A549 (cell line): ENCODE measurements at regions of chr7 and their contacts with region 1.

Region 1: DNA sequence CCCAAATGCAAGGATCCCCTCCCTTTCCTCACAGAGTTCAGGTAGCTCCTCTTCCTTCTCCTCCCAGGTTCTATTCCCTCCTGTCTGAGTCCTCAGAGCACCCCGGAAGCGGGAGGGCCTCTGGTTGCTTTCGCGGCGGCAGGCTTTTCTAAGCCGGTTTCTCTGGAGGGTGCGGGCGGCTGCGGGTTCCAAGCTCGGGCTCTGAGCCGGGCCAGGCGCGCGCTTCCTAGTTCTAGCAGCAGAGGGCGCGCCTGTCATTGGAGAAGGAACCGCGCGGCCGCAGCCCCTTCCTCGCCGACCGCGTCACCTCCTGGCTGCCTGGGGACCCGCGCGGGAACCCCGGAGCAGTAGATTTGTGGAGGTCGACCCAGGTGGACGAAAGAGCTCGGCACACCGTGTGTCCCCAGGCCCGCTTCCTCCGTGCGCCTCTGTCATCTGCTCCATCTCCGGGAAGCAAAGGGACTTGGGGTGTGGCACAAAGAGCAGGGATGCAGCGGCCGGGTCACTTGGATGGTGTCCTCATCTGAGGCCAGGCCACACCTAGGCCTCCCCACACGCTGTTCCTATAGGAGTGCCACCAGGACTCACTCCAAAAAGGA is 389.0 kb upstream of the PODXL start:
- DNase-seq: peak; percentile 56 to 58
- ATAC-seq: peak; percentile 61 to 86
- H3K4me3 ChIP-seq: peak overlapping the region; percentile 24; the same call in 1 of the 3 replicates
- H3K27ac ChIP-seq: peak overlapping the region; percentile 76 to 92
- H3K4me1 ChIP-seq: peaks cover 45% of the 10 kb centered on the region
- CTCF ChIP-seq: peak; percentile 92
- EP300 ChIP-seq: no peak
- POLR2A ChIP-seq: no peak
- RAD21 ChIP-seq: peak; percentile 95 to 99

Region 2: DNA sequence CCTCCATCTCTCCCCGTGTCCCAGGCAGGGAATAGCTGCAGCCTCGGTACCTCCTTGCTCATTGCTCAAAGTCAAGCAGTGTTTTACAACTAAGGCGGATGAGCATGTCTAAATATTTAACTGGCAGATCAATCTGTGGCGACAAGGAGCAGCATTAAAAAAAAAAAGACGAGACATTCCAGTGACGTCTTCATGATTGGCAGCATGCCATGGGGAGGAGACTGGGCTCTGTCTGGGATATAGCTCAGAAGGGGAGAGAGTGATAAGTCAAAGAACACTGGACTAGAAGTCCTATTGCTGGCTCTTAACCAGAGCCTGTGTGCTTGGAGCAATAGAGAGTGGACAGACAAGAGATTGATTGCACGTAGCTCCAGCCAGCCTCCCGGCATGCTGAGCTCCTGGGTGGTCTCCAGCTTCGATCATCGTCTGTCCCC is 101.5 kb before region 1 on chr7:
- CTCF ChIA-PET with region 1: interaction called, 14 read pairs
- POLR2A ChIA-PET with region 1: no interaction called
- DNase-seq: peak in 1 of 2 experiments; percentile 60
- ATAC-seq: peak; percentile 81 to 82
- H3K4me3 ChIP-seq: no peak overlapping the region
- H3K27ac ChIP-seq: 0 out of 6 replicates have a peak overlapping the region, but pooled peaks of 1 of the 2 experiments have one; percentile 22
- H3K4me1 ChIP-seq: peaks cover 17% of the 10 kb centered on the region; the same call in 2 of the 3 replicates
- CTCF ChIP-seq: no peak
- EP300 ChIP-seq: no peak
- POLR2A ChIP-seq: no peak
- RAD21 ChIP-seq: no peak

Region 3: DNA sequence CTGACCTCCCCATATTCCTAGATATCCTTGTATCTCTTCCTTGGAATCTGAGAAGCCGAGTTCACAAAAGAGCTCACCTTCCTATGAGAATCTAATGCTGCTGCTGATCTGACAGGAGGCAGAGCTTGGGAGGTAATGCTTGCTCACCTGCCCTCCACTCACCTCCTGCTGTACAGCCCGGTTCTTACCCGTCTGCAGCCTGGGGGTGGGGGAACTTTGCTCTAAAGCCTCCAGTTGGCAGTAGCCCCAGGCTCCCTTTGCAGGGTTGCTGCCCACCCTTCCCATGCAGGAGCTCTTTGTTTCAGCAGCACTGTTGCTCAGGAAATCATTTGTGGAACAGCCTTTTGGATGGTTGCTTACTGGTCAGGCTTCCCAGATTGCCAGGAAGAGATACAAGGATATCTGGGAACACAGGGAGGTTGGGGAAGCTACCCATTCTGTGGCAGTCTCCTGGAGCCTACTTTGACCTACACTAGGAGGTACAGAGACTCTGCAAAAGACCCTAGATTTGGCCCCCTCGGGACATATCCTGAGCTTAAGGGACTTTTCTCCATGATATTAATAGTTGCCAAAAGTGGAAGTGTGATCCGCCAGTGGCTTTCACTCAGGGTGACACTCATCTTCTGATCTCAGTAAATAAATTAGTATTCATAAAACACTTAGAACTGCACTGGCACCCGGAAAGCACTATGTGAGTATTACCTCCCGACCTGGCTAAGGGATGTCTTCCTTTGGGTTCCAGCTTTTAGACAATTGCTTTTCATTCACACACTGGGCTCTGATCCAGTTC is 25.3 kb before region 1 on chr7:
- CTCF ChIA-PET with region 1: interaction called, 10 read pairs
- POLR2A ChIA-PET with region 1: no interaction called
- DNase-seq: no peak
- ATAC-seq: no peak
- H3K4me3 ChIP-seq: no peak overlapping the region
- H3K27ac ChIP-seq: no peak overlapping the region
- H3K4me1 ChIP-seq: no peaks in the 10 kb centered on the region
- CTCF ChIP-seq: no peak
- EP300 ChIP-seq: no peak
- POLR2A ChIP-seq: no peak
- RAD21 ChIP-seq: no peak

Region 4: GRCh38 chr7:131964203-131964602 is 18.8 kb after region 1 on chr7:
- CTCF ChIA-PET with region 1: interaction called, 11 read pairs
- POLR2A ChIA-PET with region 1: no interaction called
- DNase-seq: no peak
- ATAC-seq: no peak
- H3K4me3 ChIP-seq: no peak overlapping the region
- H3K27ac ChIP-seq: no peak overlapping the region
- H3K4me1 ChIP-seq: no peaks in the 10 kb centered on the region
- CTCF ChIP-seq: no peak
- EP300 ChIP-seq: no peak
- POLR2A ChIP-seq: no peak
- RAD21 ChIP-seq: no peak

Region 5: GRCh38 chr7:132152131-132152889 is 206.9 kb after region 1 on chr7:
- CTCF ChIA-PET with region 1: interaction called, 52 read pairs
- POLR2A ChIA-PET with region 1: no interaction called
- DNase-seq: no peak
- ATAC-seq: no peak
- H3K4me3 ChIP-seq: no peak overlapping the region
- H3K27ac ChIP-seq: no peak overlapping the region
- H3K4me1 ChIP-seq: no peaks in the 10 kb centered on the region
- CTCF ChIP-seq: no peak
- EP300 ChIP-seq: no peak
- POLR2A ChIP-seq: no peak
- RAD21 ChIP-seq: no peak

Region 6: DNA sequence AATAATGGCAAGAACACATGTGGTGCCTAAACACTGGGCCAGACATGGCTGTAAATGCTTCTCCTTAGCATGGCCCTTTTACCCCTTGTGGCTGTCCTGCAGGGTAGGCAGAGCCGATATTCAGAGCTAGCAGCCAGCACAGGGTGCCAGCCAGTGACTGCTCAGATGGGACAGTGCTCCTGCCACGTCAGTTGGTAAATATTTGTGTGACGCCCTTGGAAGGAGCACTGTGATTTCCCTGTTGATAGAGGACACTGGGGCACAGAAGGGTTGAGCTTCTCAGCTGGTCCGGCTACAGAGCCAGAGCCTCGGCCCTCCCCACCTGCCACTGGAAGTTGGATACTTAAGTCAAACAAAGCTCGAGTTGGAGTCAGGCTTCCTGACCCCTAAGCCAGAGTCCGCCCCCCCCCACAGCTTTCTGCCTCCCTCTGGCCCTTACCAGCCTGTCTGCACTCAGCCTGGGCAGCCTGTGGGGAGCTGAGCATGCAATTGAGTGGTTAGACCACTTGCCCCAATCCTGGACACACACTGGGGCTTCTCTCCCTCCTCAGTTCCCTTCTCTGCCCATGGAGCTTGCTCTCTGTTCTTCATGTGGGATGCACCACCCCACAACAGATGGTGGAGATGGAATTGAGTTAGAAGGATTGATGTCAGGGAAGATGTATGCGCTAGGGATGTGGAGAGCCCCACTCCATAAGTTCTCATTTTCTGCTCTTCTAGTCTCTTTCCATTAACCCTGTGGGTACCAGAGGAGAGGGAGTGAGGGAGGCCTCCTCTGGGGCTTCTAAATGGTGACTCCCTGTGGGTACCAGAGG is 280.0 kb after region 1 on chr7:
- CTCF ChIA-PET with region 1: interaction called, 11 read pairs
- POLR2A ChIA-PET with region 1: no interaction called
- DNase-seq: peak; percentile 44 to 50
- ATAC-seq: peak in 1 of 2 experiments; percentile 71; a peak in 4 of 6 replicates
- H3K4me3 ChIP-seq: no peak overlapping the region
- H3K27ac ChIP-seq: peak overlapping the region; percentile 35 to 38; a peak in 3 of 6 replicates
- H3K4me1 ChIP-seq: peaks cover 15% of the 10 kb centered on the region
- CTCF ChIP-seq: no peak
- EP300 ChIP-seq: no peak
- POLR2A ChIP-seq: no peak
- RAD21 ChIP-seq: no peak